ENCODE measurements at regions of chr13 and their contacts with region 1.

Region 1: DNA sequence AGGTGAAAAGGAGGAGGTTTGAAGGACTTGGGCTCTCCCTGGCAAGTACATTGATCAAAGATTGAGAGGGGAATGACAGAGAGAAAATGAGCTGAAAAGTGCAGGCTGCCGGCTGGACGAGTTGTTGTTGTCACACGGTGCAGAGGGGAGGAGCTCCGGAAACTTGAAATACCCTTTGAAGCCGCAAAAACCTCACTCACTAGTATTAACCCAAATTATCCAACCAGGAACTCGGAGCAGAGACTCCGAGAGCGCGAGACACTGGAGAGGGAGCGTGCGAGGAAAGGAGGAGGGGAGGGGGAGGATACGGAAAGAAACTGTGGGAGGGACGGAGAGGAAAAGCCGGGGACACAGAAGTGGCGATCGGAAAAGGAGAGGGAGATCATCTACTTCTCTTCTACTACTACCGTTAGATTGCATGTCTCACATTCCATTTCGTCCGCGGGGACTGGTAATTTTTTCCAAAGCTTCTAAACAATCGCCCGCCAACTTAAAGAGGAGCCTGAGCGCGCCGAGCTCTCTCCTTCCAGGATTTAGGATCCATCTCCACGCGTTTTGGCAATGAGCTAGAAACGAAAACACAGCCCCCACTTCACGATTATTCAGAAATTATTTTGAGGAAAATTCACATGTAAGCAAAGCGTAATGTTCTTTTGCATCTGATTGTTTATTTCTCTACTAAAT is at the start of gene DACH1:
- DNase-seq: peak; percentile 90

Region 2: DNA sequence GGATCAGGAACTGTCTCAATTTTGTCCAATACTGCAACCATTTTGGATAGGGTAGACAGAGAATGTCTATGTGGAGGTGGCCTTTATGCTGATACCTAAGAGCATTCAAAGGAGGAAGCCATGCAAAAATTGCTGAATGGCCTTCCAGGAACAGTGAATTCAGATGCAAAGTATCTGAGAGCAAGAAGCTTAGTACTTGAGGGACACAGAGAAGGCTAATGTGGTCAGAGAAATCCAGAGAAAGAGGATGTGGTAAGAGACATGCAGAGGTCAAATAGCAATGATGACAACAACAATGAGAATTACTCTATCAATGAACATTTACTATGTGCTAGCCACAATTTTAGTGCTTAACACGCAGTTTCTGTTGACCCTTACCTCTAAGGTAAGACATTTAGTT is 973.4 kb before region 1 on chr13:
- CTCF ChIA-PET with region 1: no interaction called
- POLR2A ChIA-PET with region 1: no interaction called
- DNase-seq: no peak

Region 3: GRCh38 chr13:71801781-71802180 is 65.5 kb before region 1 on chr13:
- CTCF ChIA-PET with region 1: no interaction called
- POLR2A ChIA-PET with region 1: interaction called, 12 read pairs
- DNase-seq: no peak

Region 4: DNA sequence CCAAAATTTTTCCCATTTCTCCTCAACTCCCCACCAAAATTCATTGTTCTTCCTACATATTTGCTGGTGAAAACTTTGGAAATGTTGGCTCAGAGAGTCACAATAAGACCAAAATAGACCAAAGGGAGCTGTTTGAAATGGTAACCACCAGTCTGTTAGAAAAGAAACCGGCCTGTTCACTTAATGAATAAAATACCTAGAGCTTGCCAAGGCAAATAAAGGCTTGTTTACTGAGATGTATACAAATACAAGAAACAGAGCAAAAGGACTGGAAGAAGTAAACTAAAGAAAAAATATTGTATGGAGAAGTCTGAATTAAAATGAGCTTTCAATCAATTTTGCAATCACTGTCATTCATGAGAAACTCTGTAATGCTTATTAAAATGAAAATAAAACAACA is 32.2 kb before region 1 on chr13:
- CTCF ChIA-PET with region 1: interaction called, 4 read pairs
- POLR2A ChIA-PET with region 1: interaction called, 14 read pairs
- DNase-seq: no peak

Region 5: GRCh38 chr13:71842003-71842402 is 25.3 kb before region 1 on chr13:
- CTCF ChIA-PET with region 1: no interaction called
- POLR2A ChIA-PET with region 1: interaction called, 11 read pairs
- DNase-seq: no peak

Region 6: GRCh38 chr13:71879129-71879535 is 11.9 kb after region 1 on chr13:
- CTCF ChIA-PET with region 1: interaction called, 10 read pairs
- POLR2A ChIA-PET with region 1: interaction called, 21 read pairs
- DNase-seq: peak; percentile 69

Region 7: DNA sequence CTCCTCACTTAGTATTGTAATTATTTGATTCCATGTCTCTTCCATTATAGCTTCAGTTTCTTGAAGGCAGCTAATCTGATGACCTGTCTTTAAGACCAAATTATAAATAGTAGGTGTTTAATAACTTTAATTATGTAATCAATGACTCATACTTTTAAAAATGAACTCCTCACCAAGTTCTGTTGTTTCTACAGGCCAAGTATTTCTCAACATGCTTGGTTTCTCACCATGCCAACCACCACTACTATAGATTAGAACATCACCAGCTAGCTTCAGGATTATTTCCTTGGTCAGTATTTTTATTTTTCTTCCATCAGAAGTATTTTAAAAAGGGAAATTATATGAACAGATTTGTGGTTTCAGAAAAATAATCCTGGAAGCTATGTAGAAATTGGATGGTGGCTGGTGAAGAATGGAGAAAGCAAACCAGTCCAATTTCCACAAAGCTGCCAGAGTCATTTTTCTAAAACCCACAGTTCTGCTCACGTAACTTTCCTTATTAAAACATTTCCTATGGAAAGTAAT is 237.4 kb after region 1 on chr13:
- CTCF ChIA-PET with region 1: no interaction called
- POLR2A ChIA-PET with region 1: no interaction called
- DNase-seq: no peak